Naive thymus-derived CD8-positive, alpha-beta T cell (primary cell): ENCODE measurements at regions of chr4 and their contacts with region 1.

Region 1: DNA sequence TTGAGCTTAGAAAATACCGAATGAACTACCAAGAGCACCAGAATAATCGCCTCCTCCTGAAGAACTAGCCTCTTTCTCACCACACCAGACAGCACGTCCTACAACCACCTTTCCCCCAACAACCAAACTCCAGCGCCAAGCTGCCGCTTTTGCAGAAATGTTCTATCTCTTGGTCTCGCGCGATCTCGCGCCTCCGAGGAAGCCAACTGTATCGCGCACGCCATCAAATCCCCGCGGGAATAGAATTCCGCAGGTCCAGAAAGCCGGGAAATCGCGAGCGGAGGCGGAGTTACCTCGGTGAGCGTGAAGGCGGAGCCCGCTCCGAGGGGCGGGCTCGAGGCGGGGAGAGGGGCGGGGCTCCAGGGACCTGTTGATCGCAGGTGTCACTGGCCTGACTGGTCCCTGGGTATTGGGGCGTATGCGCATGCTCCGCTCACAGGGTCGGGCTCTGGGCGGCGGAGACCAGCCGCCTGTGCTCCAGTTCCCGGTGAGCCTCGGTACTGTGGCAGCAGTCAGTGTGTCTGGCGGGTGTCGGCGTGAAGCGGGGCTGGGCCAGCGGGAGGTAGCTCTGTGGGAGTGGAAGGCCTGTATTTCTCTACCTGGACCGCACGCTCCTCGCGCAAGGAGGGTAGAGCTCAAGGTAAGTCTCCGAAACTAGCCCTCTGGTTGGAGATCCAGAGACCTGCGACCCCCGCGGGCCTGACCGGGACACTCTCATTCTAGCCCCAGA is at the start of gene USP53:
- DNase-seq: peak; percentile 93 to 99 (median 97)
- ATAC-seq: peak; percentile 92
- H3K4me3 Mint-ChIP-seq: peak within 1 kb of the TSS; percentile 90 to 100 (median 95)
- H3K27ac Mint-ChIP-seq: peak within 1 kb of the TSS; percentile 92 to 100 (median 96)
- H3K4me1 Mint-ChIP-seq: peaks cover 12 to 50% (median 40%) of the 10 kb centered on the region in 4 donors
- H3K27me3 Mint-ChIP-seq: peaks cover 0 to 6% (median 0%) of the 10 kb centered on the region in 5 donors
- polyA plus RNA-seq, gene USP53: 6.5 to 23.5 (median 12.5) TPM

Region 2: DNA sequence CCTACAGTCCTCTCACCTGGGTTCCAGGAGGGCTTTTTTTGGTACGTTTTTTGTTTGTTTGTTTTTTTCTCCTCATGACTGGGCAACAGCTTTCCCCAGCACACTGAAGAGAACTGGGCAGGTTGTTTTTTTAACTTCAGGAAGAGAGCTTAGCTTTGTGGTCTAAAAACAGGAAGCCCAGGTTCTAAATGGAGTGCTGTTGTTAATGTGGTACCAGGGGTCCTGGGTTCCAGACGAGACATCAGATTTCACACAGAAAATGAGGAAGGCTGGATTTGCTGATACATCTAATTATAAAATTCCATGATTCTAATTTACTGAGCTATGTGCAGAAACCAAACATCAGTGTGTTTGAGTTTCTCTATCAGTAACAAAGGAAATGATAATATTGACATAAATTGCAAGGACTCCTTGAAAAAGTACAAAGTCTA is 72.6 kb before region 1 on chr4:
- POLR2A ChIA-PET with region 1: interaction called, 19 read pairs
- DNase-seq: peak in 3 of 10 donors; percentile 4 to 15 (median 9)
- ATAC-seq: peak; percentile 59 to 67
- H3K4me3 Mint-ChIP-seq: peak overlapping the region; percentile 59 to 82 (median 72)
- H3K27ac Mint-ChIP-seq: peak overlapping the region; percentile 46 to 93 (median 86)
- H3K4me1 Mint-ChIP-seq: peaks cover 12 to 46% (median 35%) of the 10 kb centered on the region in 4 donors
- H3K27me3 Mint-ChIP-seq: no peaks in the 10 kb centered on the region

Region 3: GRCh38 chr4:119300101-119300978 is 87.9 kb after region 1 on chr4:
- POLR2A ChIA-PET with region 1: interaction called, 29 read pairs
- DNase-seq: peak; percentile 83 to 93 (median 88)
- ATAC-seq: peak; percentile 90 to 96
- H3K4me3 Mint-ChIP-seq: peak overlapping the region; percentile 93 to 100 (median 98)
- H3K27ac Mint-ChIP-seq: peak overlapping the region; percentile 98 to 100 (median 100)
- H3K4me1 Mint-ChIP-seq: peaks cover 15 to 39% (median 32%) of the 10 kb centered on the region in 4 donors
- H3K27me3 Mint-ChIP-seq: no peaks in the 10 kb centered on the region